Activated CD4-positive, alpha-beta T cell treated with anti-CD3 and anti-CD28 coated beads, Interleukin-2, amount 10 ng/mL, durations not matched to agents 7 days and 5 days (primary cell): ENCODE measurements at regions of chr3 and their contacts with region 1.

Region 1: DNA sequence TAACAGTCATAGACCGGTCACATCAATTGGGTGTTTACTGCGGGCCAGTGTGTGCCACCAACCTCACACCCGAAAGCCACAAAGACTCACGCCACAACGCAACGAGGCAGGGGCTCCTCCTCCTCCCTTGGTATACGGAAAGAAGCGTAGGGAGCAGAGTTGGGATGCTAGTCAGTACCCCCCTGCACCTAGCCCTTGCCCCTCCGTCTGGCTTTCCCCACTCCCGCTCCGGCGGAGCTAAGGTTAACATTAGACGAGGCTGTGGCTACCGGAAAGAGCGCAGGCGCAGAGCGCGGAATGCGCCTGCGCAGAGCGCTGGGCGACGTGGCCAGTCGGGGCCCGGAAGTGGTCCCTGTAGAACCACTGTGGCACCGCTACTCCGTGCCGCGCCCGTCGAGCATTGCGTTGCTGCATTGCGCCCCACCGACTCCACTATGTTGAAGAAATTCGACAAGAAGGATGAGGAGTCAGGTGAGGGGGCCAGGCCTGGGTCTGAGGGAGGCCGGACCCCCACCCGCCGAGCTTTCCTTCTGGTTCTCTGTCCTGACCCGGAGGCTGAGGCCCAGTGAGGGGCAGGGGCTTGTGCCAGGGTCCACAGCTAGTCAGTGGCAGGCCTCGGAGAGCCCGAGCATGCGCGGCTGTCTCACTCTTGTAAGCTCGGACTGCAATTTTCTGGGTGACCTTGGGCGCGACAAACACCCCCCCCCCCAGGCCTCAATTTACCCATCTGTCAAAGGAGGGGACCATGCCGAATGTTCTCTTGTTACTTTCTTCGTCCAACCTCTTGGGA is at the start of gene COPG1:
- DNase-seq: peak; percentile 89
- H3K4me3 Mint-ChIP-seq: peak within 1 kb of the TSS; percentile 90
- H3K27ac Mint-ChIP-seq: peak within 1 kb of the TSS; percentile 96
- H3K4me1 Mint-ChIP-seq: peaks cover 54% of the 10 kb centered on the region
- H3K27me3 Mint-ChIP-seq: no peaks in the 10 kb centered on the region
- total RNA-seq, gene COPG1: 110 to 136 TPM

Region 2: DNA sequence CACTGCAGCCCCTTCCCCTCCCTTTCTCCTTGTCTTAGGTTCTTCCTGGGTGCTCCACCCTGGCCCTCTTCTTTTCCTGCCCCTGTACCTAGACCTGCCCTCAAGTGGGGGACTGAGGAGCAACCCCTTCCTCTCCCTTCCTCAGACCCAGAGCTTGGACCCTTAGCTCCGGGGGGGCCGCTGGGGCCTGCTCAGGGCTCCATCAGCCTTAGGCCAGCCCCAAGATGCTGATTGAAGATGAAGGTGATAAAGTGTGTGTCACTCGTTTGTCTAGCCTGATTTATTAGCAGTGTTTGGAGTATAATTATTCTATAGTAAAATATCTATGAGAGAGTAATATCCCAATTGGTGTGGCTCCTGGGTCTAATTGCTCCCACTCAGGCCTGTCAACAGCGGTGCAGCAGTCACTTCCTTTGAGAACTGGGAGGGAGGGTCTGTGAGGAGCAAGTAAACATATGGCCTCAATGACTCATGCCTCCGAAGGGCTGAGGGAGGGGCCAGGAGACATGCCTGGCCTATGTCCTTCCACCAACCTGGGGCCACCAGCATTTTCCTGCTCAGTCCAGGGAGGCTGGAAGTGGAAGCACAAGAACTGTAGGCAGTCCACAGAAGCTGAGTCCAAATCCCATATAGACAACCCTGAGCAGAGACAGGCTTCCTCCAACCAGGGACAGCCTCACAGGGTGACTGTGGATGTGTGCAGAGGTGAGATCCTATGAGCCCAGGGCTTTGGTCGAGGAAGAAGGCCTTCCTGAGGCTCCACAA is 906.0 kb before region 1 on chr3:
- CTCF ChIA-PET with region 1: no interaction called
- POLR2A ChIA-PET with region 1: no interaction called
- DNase-seq: no peak
- H3K4me3 Mint-ChIP-seq: no peak overlapping the region
- H3K27ac Mint-ChIP-seq: no peak overlapping the region
- H3K4me1 Mint-ChIP-seq: no peaks in the 10 kb centered on the region
- H3K27me3 Mint-ChIP-seq: no peaks in the 10 kb centered on the region

Region 3: GRCh38 chr3:128969993-128970739 is 279.3 kb before region 1 on chr3:
- CTCF ChIA-PET with region 1: interaction called, 29 read pairs
- POLR2A ChIA-PET with region 1: interaction called, 18 read pairs
- DNase-seq: peak; percentile 76
- H3K4me3 Mint-ChIP-seq: no peak overlapping the region
- H3K27ac Mint-ChIP-seq: no peak overlapping the region
- H3K4me1 Mint-ChIP-seq: peaks cover 13% of the 10 kb centered on the region
- H3K27me3 Mint-ChIP-seq: peaks cover 4% of the 10 kb centered on the region

Region 4: GRCh38 chr3:129052675-129053074 is 196.8 kb before region 1 on chr3:
- CTCF ChIA-PET with region 1: interaction called, 57 read pairs
- POLR2A ChIA-PET with region 1: no interaction called
- DNase-seq: no peak
- H3K4me3 Mint-ChIP-seq: no peak overlapping the region
- H3K27ac Mint-ChIP-seq: no peak overlapping the region
- H3K4me1 Mint-ChIP-seq: peaks cover 8% of the 10 kb centered on the region
- H3K27me3 Mint-ChIP-seq: peaks cover 10% of the 10 kb centered on the region

Region 5: DNA sequence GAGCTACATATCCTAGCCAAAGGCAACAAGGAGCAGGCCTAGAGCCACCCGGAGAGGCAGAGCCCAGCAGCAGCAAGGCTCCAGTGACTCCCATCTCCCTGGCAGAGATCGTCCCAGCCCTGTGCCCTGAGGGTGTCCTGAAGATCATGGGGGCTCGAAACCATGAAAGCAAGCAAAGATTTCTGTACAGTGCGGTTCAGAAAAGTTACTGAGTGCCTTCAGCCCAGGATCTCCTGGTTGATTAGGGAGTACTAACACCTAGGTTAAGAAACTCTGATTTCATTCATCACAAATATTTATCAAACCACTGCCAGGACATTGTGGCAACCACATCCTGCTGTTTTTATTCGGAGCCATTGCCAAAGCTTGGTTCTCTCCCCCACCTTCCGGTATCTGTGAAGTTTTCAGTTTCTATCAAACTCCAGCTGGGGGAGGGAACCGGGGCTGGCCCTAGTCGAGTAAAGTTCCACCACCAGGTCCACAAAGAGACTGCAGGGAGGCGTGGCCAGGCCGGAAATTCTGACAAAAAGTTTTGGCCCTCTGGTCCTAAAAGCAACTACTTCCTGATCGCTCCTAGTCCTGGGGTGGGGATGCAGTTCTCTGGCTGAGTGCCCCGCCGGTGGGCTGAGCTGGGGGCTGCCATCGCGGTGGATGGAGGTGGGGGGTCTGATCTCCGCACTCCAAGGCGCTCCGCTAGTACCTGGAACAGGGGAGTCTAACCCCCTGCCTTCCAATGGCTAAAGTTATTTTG is 129.0 kb before region 1 on chr3:
- CTCF ChIA-PET with region 1: interaction called, 11 read pairs
- POLR2A ChIA-PET with region 1: no interaction called
- DNase-seq: peak; percentile 97
- H3K4me3 Mint-ChIP-seq: peak overlapping the region; percentile 92
- H3K27ac Mint-ChIP-seq: peak overlapping the region; percentile 98
- H3K4me1 Mint-ChIP-seq: peaks cover 49% of the 10 kb centered on the region
- H3K27me3 Mint-ChIP-seq: no peaks in the 10 kb centered on the region

Region 6: DNA sequence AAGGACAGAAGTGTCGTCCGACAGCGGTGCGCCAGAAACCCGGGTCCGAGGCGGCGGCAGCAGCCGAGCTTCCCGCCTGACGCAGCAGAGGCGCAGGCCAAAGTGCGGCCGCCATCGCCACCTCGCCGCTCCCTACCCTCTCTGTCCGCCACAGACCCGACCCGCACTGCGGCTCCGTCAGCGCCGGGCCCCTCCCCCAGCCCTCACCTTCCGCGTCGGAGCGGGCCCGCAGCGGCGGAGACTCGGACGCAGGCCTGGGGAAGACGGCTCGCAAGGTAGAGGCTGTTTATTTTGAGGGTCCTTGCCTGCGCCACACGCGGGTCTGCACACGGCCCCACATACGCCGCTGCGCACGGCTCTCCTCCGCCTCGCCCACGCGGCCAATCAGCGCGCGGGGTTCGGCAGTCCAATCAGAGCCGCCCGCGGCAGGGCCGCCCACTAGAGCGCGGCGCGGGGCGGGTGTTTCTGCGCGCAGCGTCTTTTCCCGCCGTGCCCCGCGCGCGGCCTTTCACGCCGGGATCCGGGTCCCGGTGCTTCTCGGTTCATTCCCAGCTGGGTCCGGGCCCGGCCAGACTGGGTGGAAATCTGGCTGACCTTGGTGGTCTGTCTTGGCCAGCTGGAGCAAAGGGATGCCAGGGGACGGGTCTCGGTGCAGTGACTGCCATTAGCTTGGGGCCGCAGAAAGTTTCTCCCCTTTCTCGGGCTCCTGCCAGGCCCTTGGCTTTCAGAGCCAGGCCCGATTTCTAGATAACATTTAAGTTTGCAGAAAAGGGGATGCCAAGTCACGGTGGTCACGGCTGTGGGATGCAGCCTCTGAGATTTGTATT is 65.7 kb before region 1 on chr3 and contains the start of gene CNBP:
- CTCF ChIA-PET with region 1: interaction called, 29 read pairs
- POLR2A ChIA-PET with region 1: interaction called, 3 read pairs
- DNase-seq: peak; percentile 91
- H3K4me3 Mint-ChIP-seq: peak within 1 kb of the TSS; percentile 87
- H3K27ac Mint-ChIP-seq: peak within 1 kb of the TSS; percentile 99
- H3K4me1 Mint-ChIP-seq: peaks cover 46% of the 10 kb centered on the region
- H3K27me3 Mint-ChIP-seq: no peaks in the 10 kb centered on the region
- total RNA-seq, gene CNBP: 263 to 270 TPM

Region 7: DNA sequence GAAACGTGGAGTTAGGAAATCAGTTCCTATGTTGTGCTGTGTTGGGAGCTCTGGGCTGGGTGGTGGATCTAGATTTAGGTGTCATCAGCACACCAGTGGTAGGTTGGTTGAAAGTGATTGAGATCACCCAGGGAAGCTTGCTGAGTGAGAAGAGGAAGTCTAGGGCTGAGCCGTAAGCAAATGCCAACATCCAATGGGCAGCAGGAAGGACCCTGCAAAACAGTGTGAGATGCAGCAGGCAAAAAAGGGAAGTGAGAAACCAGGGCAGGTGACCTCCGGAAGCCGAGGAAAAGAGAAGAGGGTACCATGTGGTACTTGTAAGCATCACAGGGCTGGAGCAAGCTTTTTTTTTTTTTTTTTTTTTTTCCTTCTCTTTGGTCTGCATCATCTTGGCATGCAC is 15.9 kb before region 1 on chr3:
- CTCF ChIA-PET with region 1: interaction called, 38 read pairs
- POLR2A ChIA-PET with region 1: interaction called, 5 read pairs
- DNase-seq: no peak
- H3K4me3 Mint-ChIP-seq: no peak overlapping the region
- H3K27ac Mint-ChIP-seq: peak overlapping the region; percentile 83
- H3K4me1 Mint-ChIP-seq: peaks cover 74% of the 10 kb centered on the region
- H3K27me3 Mint-ChIP-seq: no peaks in the 10 kb centered on the region

Region 8: GRCh38 chr3:129343643-129344332 is 94.3 kb after region 1 on chr3:
- CTCF ChIA-PET with region 1: no interaction called
- POLR2A ChIA-PET with region 1: no interaction called
- DNase-seq: peak; percentile 24
- H3K4me3 Mint-ChIP-seq: no peak overlapping the region
- H3K27ac Mint-ChIP-seq: no peak overlapping the region
- H3K4me1 Mint-ChIP-seq: peaks cover 3% of the 10 kb centered on the region
- H3K27me3 Mint-ChIP-seq: peaks cover 23% of the 10 kb centered on the region

Region 9: DNA sequence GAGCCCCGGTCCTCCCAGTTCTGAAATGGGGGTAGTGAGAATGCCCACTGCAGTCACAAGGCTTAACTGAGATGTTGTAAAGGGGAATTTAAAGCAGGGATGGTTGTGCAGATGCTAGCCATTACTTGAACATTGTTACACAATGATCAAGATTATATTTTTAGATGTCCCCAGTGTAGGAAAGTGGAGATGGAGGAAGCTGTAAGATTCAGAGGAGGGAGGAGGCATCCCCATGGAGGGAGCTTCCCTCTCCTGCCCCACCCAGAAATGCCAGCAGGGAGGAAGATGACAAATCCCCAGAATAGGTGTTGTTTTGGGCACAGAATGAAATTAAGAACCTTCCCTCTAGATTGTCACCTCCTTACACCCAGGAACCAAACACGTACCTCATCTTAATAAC is 132.9 kb after region 1 on chr3:
- CTCF ChIA-PET with region 1: no interaction called
- POLR2A ChIA-PET with region 1: no interaction called
- DNase-seq: no peak
- H3K4me3 Mint-ChIP-seq: no peak overlapping the region
- H3K27ac Mint-ChIP-seq: no peak overlapping the region
- H3K4me1 Mint-ChIP-seq: no peaks in the 10 kb centered on the region
- H3K27me3 Mint-ChIP-seq: no peaks in the 10 kb centered on the region